ENCODE measurements at regions of chr9 and their contacts with region 1.

Region 1: GRCh38 chr9:68584189-68585033 is 43.7 kb upstream of the TMEM252 start:
- DNase-seq: peak; percentile 93
- H3K4me3 Mint-ChIP-seq: no peak overlapping the region
- H3K27ac Mint-ChIP-seq: no peak overlapping the region
- H3K4me1 Mint-ChIP-seq: no peaks in the 10 kb centered on the region
- H3K27me3 Mint-ChIP-seq: peaks cover 2% of the 10 kb centered on the region

Region 2: GRCh38 chr9:68685770-68686169 is 101.4 kb after region 1 on chr9:
- CTCF ChIA-PET with region 1: interaction called, 3 read pairs
- intact Hi-C with region 1: loop called (anchors 1 kb)
- DNase-seq: peak; percentile 61
- H3K4me3 Mint-ChIP-seq: no peak overlapping the region
- H3K27ac Mint-ChIP-seq: no peak overlapping the region
- H3K4me1 Mint-ChIP-seq: peaks cover 5% of the 10 kb centered on the region
- H3K27me3 Mint-ChIP-seq: peaks cover 16% of the 10 kb centered on the region

Region 3: GRCh38 chr9:68704814-68705530 is 120.6 kb after region 1 on chr9 and contains the start of gene PIP5K1B:
- CTCF ChIA-PET with region 1: interaction called, 5 read pairs
- intact Hi-C with region 1: loop called (anchors 5 kb)
- DNase-seq: peak; percentile 62
- H3K4me3 Mint-ChIP-seq: peak within 1 kb of the TSS; percentile 82
- H3K27ac Mint-ChIP-seq: no peak within 1 kb of the TSS
- H3K4me1 Mint-ChIP-seq: peaks cover 17% of the 10 kb centered on the region
- H3K27me3 Mint-ChIP-seq: peaks cover 68% of the 10 kb centered on the region
- total RNA-seq, gene PIP5K1B: 0.38 to 0.42 TPM

Region 4: GRCh38 chr9:68844631-68845612 is 260.5 kb after region 1 on chr9:
- CTCF ChIA-PET with region 1: interaction called, 3 read pairs
- intact Hi-C with region 1: loop called (anchors 5 kb)
- DNase-seq: peak; percentile 35
- H3K4me3 Mint-ChIP-seq: no peak overlapping the region
- H3K27ac Mint-ChIP-seq: no peak overlapping the region
- H3K4me1 Mint-ChIP-seq: peaks cover 4% of the 10 kb centered on the region
- H3K27me3 Mint-ChIP-seq: no peaks in the 10 kb centered on the region

Region 5: GRCh38 chr9:69027355-69028096 is 443.1 kb after region 1 on chr9:
- CTCF ChIA-PET with region 1: interaction called, 24 read pairs
- intact Hi-C with region 1: loop called (anchors 1 kb)
- DNase-seq: peak; percentile 65
- H3K4me3 Mint-ChIP-seq: no peak overlapping the region
- H3K27ac Mint-ChIP-seq: no peak overlapping the region
- H3K4me1 Mint-ChIP-seq: peaks cover 36% of the 10 kb centered on the region
- H3K27me3 Mint-ChIP-seq: no peaks in the 10 kb centered on the region

Measured in activated naive CD4-positive, alpha-beta T cell treated with anti-CD3 and anti-CD28 coated beads for 36 hours (primary cell).